SK-N-SH (cell line): ENCODE measurements at regions of chr16 and their contacts with region 1.

Region 1: DNA sequence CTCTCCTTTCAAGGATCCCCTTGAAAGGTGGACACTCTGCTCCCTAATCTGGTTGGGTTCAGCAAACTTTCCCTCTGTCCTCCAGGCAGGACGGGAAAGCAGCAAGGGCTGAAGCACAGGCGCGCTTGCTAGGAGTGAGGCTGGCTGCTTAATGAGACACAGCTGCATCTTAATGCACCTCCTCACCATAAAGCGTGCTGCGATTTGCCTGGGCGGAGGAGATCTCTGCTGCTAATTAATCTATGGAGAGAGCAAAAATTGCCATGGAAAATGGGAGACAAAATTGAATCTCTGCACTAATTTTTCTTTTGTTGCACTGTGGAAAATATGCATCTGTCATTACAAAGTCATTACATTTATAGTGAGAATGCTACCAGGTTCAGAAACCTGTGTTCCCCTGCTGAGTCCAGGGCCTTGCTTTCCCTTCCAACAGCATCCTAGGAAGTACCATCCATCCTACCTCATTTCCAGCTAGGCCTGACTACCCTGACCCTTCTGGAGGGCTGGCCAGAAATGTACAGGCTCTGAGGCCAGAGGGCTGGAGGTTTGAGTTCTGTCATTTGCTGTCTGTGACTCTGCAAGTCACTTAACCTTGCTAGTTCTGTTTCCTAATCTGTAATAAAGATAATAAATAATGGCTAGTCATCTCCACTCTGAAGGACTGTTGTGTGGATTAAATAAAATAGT is 43.5 kb upstream of the BCAR1 start:
- DNase-seq: peak; percentile 66
- H3K4me3 ChIP-seq: no peak overlapping the region
- H3K27ac ChIP-seq: peak overlapping the region in 1 of 2 experiments; percentile 96; a peak in 2 of 4 replicates
- H3K4me1 ChIP-seq: peaks cover 17 to 40% of the 10 kb centered on the region in 2 experiments; a peak in 3 of 4 replicates
- H3K27me3 ChIP-seq: no peaks in the 10 kb centered on the region
- CTCF ChIP-seq: no peak
- EP300 ChIP-seq: peak in 1 of 2 experiments; percentile 61; a peak in 1 of 4 replicates
- RAD21 ChIP-seq: peak; percentile 7; the same call in 1 of the 2 replicates

Region 2: GRCh38 chr16:75160386-75160785 is 134.5 kb before region 1 on chr16:
- CTCF ChIA-PET with region 1: no interaction called
- POLR2A ChIA-PET with region 1: no interaction called
- DNase-seq: no peak
- H3K4me3 ChIP-seq: no peak overlapping the region
- H3K27ac ChIP-seq: no peak overlapping the region
- H3K4me1 ChIP-seq: no peaks in the 10 kb centered on the region
- H3K27me3 ChIP-seq: no peaks in the 10 kb centered on the region
- CTCF ChIP-seq: no peak
- EP300 ChIP-seq: no peak
- RAD21 ChIP-seq: no peak

Region 3: DNA sequence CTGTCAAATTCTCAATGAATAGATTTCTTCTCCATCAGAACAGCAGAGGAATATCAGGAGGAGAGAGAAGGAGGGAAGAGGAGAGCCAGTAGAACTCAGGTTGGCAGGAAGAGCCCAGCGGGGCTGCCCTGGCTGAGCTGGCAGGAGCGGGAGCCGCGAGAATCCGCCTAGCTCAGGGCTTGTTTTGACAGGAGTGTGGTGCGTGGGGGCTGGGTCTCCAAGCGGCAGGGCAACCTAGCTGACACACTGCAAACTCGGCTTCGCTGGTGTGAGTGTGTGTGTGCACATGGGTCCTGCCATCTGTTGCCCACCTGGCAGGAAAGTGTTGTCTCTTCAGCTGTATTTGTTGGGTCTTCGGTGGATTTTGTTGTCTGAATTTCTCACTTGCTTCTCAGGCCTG is 15.6 kb before region 1 on chr16:
- CTCF ChIA-PET with region 1: interaction called, 22 read pairs
- POLR2A ChIA-PET with region 1: no interaction called
- DNase-seq: no peak
- H3K4me3 ChIP-seq: no peak overlapping the region
- H3K27ac ChIP-seq: no peak overlapping the region
- H3K4me1 ChIP-seq: peaks cover 0 to 22% of the 10 kb centered on the region in 2 experiments; a peak in 1 of 4 replicates
- H3K27me3 ChIP-seq: no peaks in the 10 kb centered on the region
- CTCF ChIP-seq: no peak
- EP300 ChIP-seq: no peak
- RAD21 ChIP-seq: no peak